Aorta (tissue), 5 donors: ENCODE measurements at regions of chr2 and their contacts with region 1.

Region 1: GRCh38 chr2:21042958-21043743 is 722 bp downstream of the APOB start:
- DNase-seq: peak; percentile 70 to 90
- ATAC-seq: peak; percentile 82
- H3K4me3 ChIP-seq: no peak overlapping the region
- H3K27ac ChIP-seq: peak overlapping the region; percentile 31 to 61
- H3K4me1 ChIP-seq: peaks cover 0 to 2% of the 10 kb centered on the region in 2 donors
- H3K27me3 ChIP-seq: no peaks in the 10 kb centered on the region

Region 2: GRCh38 chr2:20675701-20676352 is 367.3 kb before region 1 on chr2:
- intact Hi-C with region 1: loop called in 1 of 2 experiments (anchors 5 kb)
- DNase-seq: no peak
- ATAC-seq: peak; percentile 48
- H3K4me3 ChIP-seq: no peak overlapping the region
- H3K27ac ChIP-seq: peak overlapping the region; percentile 23 to 80
- H3K4me1 ChIP-seq: no peaks in the 10 kb centered on the region
- H3K27me3 ChIP-seq: no peaks in the 10 kb centered on the region

Region 3: DNA sequence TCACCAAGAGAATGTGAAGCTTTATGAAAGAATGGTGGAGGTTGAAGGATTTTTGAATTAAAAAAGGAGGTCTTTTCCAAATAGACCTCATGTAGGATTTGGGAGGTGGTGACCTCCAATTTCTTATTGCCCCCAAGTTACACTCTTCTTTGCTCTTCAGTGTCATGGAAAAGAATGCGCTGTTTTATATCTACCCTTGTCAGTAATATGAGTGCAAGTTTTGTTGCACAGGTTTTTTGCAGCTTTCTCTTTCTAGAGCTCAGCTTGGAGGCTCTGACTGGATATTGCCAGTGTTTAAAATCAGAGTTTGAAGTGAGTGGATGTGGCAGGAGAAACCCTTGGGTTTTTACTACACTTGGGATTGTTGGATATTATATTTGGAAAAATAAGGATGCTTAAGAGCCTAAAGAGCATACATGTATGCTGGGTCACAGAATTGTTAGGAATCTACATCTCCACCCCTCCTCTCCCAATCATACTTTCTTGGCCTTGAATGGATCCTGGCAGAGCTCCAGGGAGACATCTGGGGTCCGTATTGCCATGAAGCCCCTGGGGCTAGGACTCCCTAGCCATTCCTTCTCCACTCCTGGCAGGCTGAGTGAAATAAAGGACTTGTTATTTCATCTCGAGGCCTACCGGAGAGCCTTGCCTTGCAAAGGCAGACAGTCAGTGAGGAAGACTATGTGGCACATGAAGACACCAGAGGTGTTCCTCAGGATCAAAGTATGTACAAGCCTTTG is 43.1 kb before region 1 on chr2:
- intact Hi-C with region 1: loop called in 1 of 2 experiments (anchors 5 kb)
- DNase-seq: no peak
- ATAC-seq: no peak
- H3K4me3 ChIP-seq: no peak overlapping the region
- H3K27ac ChIP-seq: no peak overlapping the region
- H3K4me1 ChIP-seq: peaks cover 0 to 1% of the 10 kb centered on the region in 2 donors
- H3K27me3 ChIP-seq: no peaks in the 10 kb centered on the region

Region 4: DNA sequence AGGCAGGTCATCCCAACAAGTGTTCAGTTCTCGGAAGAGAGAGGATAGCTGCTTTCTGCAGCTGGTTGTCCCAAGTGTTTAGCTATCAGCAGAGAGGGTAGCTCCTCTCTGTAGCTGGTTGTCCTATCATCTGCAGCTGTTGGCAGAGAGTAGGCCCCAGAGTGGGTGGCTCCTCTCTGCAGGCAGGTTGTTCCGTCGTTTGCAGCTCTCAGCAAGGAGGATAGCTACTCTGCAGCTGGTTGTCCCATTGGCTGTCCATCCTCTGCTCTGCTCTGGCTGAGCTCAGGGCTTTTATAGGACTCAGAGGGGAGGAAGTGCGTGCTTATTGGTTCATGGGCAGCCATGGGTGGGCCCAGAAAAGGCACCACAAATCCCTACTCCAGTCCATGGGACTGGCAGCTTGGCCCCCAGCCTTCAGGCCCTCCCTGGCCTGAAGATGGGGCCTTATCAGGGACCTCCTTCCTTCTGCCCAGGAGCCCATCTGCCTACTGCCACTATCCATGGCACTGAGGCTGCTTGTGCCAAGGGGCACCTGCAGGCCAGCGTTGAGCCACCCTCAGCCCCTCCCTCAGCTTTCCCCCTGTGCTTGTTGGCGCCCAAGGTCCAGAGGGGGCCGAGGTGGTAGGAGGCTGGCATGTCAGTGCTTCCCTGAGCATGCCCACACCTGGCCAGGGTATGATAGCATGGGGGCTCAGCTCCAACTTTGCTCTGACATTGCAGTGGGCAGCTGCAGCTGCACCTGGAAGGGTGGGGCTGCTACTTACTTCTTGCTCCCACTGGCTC is 118.9 kb after region 1 on chr2:
- intact Hi-C with region 1: no loop called
- DNase-seq: no peak
- ATAC-seq: no peak
- H3K4me3 ChIP-seq: no peak overlapping the region
- H3K27ac ChIP-seq: no peak overlapping the region
- H3K4me1 ChIP-seq: no peaks in the 10 kb centered on the region
- H3K27me3 ChIP-seq: no peaks in the 10 kb centered on the region

Region 5: DNA sequence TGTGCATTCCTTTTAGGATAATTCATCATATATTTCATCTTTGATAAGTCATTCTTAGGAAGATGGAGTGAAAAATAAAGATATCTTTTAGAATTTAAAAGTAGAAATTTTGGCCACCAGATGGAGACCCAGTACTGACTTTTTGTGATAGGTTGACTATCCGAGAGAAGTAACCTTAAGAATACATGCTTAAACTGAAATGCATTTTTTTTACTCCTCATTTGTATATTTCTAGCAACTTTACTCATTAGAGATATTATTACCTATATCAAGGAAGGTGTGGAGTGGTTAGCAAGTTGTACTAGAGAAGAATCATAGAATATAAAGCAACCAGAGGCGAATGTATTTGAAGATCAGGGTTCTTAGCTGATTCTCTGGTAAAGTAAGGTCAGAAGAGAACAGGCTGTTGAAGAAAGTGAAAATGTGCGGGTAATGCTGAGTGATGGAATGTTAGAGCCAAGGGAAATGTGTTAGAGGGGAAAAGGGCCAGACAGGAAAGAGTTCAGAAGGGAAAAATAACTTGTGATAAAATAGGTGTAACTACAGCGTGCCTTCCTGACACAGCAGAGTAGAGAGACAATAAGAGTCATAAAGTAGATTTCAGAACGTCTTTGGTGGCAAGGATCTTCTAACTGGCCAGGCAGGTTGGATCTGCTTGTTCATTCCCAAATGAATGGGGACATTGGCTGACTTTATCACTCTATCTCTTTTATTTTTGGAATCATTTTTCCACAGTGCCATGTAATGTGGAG is 132.9 kb after region 1 on chr2:
- intact Hi-C with region 1: loop called in 1 of 2 experiments (anchors 10 kb)
- DNase-seq: no peak
- ATAC-seq: no peak
- H3K4me3 ChIP-seq: peak overlapping the region; percentile 18 to 26
- H3K27ac ChIP-seq: peak overlapping the region in 1 of 2 donors; percentile 57
- H3K4me1 ChIP-seq: no peaks in the 10 kb centered on the region
- H3K27me3 ChIP-seq: no peaks in the 10 kb centered on the region